Psoas muscle (tissue), 8 donors: ENCODE measurements at regions of chr2 and their contacts with region 1.

Region 1: GRCh38 chr2:235493775-235494715 is at the start of gene AGAP1:
- DNase-seq: peak; percentile 92 to 95
- ATAC-seq: peak; percentile 91 to 94 (median 93)
- H3K4me3 ChIP-seq: peak within 1 kb of the TSS; percentile 83
- H3K27ac ChIP-seq: peak within 1 kb of the TSS; percentile 87
- H3K4me1 ChIP-seq: peaks cover 28% of the 10 kb centered on the region
- H3K27me3 ChIP-seq: peaks cover 0 to 3% (median 0%) of the 10 kb centered on the region in 3 donors
- CTCF ChIP-seq: no peak
- total RNA-seq, gene AGAP1: 14.3 to 21.6 (median 18.6) TPM

Region 2: GRCh38 chr2:235135990-235136561 is 358.0 kb before region 1 on chr2:
- intact Hi-C with region 1: loop called in 1 of 2 experiments (anchors 10 kb)
- DNase-seq: peak; percentile 75 to 83
- ATAC-seq: peak; percentile 58 to 73 (median 64)
- H3K4me3 ChIP-seq: no peak overlapping the region
- H3K27ac ChIP-seq: no peak overlapping the region
- H3K4me1 ChIP-seq: no peaks in the 10 kb centered on the region
- H3K27me3 ChIP-seq: no peaks in the 10 kb centered on the region
- CTCF ChIP-seq: peak; percentile 68

Region 3: GRCh38 chr2:235545339-235546156 is 51.5 kb after region 1 on chr2:
- intact Hi-C with region 1: loop called in 1 of 2 experiments (anchors 5 kb)
- DNase-seq: no peak
- ATAC-seq: no peak
- H3K4me3 ChIP-seq: no peak overlapping the region
- H3K27ac ChIP-seq: no peak overlapping the region
- H3K4me1 ChIP-seq: no peaks in the 10 kb centered on the region
- H3K27me3 ChIP-seq: no peaks in the 10 kb centered on the region
- CTCF ChIP-seq: no peak

Region 4: DNA sequence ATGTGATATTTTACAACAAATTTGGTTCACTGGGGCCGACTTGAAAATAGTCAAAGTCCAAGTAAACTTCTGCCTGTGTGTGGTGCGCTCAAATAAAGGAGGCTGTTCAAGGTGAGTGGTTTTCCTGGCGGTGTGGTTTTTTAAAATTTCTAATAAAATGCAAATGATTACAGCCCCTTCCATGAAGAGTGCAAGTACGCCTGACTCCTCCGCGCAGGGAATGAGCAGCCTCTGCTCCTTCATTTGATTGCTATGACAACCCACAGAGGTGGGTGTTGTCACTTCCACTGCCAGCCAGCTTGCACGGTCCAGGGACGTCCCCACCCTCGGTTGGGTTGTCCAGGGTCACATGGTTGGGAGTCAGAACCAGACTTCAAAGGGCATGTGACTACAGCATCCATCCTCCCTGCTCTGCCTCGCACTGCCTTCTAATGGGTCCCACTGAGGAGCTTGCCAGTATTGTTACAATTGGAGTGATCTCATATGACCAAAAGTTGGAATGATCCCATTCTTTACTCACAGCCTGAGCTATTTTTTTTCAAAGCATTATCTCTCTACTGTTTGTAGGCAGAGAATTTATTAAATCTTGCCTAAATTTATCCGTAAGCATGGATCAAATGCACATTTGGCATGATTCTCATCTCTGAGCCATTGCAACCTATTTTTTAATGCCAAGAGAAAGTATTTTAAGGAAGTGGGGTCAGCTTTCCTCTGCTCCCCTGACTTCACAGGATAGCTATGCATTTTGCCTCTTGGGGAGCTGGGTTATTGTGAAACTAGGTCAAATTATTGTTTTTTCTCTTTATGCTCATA is 121.1 kb after region 1 on chr2:
- intact Hi-C with region 1: no loop called
- DNase-seq: peak; percentile 75 to 82
- ATAC-seq: peak; percentile 66 to 84 (median 82)
- H3K4me3 ChIP-seq: no peak overlapping the region
- H3K27ac ChIP-seq: no peak overlapping the region
- H3K4me1 ChIP-seq: peaks cover 37% of the 10 kb centered on the region
- H3K27me3 ChIP-seq: no peaks in the 10 kb centered on the region
- CTCF ChIP-seq: no peak

Region 5: DNA sequence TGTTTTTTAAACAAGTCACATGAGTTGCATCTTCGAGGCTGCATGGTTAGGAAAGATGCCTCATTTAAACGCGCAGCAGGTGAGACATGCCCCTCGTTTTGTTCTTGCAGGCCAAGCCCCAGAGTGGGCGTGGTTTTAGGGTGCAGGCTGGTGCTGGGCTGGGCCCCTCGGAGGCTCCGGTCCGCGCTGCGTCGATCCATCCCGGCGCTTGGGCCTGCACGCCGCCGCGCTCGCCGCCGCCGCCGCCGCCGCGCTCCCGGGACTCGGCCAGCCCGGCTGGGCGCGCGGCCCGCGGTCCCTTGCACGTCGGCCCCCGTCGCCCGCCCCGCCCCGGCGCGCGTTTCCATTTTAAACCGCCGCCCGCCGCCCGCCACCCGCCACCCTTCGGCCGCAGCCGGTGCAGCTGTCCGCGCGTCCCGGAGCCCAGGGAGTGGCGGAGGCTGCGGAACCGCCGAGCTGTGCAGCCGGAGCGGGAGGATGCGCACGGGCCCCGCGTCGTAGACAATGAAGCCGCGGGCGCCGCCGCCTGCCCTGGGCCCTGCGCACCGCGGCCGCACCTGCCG is 175.3 kb after region 1 on chr2:
- intact Hi-C with region 1: loop called in 1 of 2 experiments (anchors 10 kb)
- DNase-seq: peak; percentile 83 to 86
- ATAC-seq: peak; percentile 81 to 86 (median 82)
- H3K4me3 ChIP-seq: peak overlapping the region; percentile 66
- H3K27ac ChIP-seq: no peak overlapping the region
- H3K4me1 ChIP-seq: peaks cover 22% of the 10 kb centered on the region
- H3K27me3 ChIP-seq: peaks cover 0 to 1% (median 0%) of the 10 kb centered on the region in 3 donors
- CTCF ChIP-seq: no peak